GM10248 (cell line): ENCODE measurements at regions of chr2 and their contacts with region 1.

Region 1: GRCh38 chr2:163171786-163172531 is 333.4 kb upstream of the KCNH7 start:
- DNase-seq: no peak
- CTCF ChIP-seq: no peak

Region 2: DNA sequence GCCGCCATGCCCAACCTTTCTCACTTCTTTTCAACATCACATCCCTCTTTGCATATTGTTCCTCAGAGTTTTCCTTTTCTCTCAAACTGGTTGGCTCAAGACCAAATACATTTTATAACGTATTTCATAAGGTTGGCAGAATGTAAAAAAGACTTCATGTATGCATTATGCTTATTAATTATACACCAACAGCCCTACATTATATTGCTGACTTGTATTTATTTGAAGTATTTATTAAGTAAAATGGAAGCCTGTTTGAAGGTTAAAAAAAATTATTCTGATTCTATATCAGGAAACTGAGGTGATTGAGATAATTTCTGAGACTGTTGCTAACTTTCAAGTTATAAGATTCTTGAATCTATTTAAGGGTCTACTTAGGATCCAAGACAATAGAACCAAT is 125.3 kb before region 1 on chr2:
- CTCF ChIA-PET with region 1: no interaction called
- POLR2A ChIA-PET with region 1: no interaction called
- DNase-seq: no peak
- CTCF ChIP-seq: no peak

Region 3: GRCh38 chr2:163142628-163143027 is 29.3 kb before region 1 on chr2:
- CTCF ChIA-PET with region 1: no interaction called
- POLR2A ChIA-PET with region 1: no interaction called
- DNase-seq: no peak
- CTCF ChIP-seq: no peak

Region 4: DNA sequence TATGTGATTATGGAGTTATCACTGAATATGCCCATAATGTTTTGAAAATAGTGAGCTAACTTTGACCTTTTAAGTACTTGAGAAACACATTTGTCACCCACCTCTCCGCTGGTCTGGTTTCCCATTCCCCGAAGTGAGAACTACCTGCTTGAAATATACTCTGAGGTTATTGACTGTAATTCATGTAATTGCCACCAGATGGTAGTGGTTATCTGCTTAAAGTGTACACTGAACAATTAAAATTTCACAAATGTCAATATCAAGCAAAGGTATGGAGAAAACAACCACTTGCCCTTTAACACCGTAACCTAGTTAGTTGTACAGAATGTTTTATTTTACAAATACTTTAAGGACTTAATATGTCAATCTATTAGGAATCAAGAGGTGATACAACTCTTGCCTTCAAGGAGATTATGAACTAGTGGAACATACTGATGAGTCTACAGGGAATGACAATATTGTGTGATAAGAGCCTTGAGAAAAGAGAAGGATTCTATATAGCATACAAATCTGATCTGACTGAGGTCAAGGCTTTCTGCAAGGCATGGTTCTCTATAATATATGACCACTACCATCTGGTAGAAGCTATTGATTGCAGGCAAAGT is 16.6 kb before region 1 on chr2:
- CTCF ChIA-PET with region 1: interaction called, 12 read pairs
- POLR2A ChIA-PET with region 1: no interaction called
- DNase-seq: peak; percentile 24
- CTCF ChIP-seq: peak; percentile 54

Region 5: DNA sequence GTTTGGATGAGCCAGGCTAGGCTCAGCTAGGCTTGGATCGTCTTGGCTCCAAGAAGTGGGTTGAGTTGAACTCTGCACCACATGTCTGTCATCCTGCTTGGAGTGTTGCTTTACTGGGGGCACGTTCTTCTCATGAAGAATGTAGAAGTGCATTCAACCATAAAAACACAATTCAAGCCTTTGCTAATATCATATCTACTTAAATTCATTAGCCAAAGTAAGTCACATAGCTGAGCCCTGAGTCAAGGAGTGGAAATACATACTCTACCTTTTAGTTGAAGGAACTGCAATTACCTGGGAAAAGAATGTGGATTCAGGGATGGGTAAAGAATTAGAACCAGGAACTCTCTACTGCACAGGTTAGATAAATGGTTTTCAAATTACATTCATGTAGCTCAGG is 27.0 kb after region 1 on chr2:
- CTCF ChIA-PET with region 1: interaction called, 10 read pairs
- POLR2A ChIA-PET with region 1: no interaction called
- DNase-seq: no peak
- CTCF ChIP-seq: no peak